ENCODE measurements at regions of chr21 and their contacts with region 1.

Region 1: DNA sequence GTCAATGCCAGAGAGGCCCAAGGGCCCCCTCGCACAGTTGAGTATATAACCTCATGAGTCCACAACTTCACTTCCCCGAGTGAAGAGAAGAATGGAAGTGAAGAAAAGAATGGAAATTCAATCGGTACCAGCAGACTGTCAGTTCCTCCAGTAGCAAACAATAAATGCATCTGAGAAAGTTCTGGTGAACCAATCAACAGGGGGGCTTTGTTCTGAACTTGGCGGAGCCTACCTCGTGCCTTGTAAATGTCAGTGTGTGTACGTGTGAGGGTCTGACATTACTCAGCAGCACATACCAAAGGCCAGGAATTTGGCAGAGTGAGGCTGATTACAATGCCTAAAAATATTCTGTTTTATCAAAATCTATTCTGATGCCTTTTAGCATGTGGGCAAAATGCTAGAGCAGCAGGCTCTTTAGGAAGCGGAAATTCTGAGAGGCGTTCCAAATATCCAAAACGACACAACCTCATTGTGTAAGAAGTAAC is 238.5 kb downstream of the LTN1 start:
- DNase-seq: peak in 1 of 2 donors; percentile 88
- H3K4me3 ChIP-seq: peak overlapping the region in 1 of 2 donors; percentile 11
- H3K27ac ChIP-seq: peak overlapping the region; percentile 86 to 96
- H3K4me1 ChIP-seq: peaks cover 4 to 38% of the 10 kb centered on the region in 2 donors
- H3K27me3 ChIP-seq: no peaks in the 10 kb centered on the region
- CTCF ChIP-seq: no peak

Region 2: DNA sequence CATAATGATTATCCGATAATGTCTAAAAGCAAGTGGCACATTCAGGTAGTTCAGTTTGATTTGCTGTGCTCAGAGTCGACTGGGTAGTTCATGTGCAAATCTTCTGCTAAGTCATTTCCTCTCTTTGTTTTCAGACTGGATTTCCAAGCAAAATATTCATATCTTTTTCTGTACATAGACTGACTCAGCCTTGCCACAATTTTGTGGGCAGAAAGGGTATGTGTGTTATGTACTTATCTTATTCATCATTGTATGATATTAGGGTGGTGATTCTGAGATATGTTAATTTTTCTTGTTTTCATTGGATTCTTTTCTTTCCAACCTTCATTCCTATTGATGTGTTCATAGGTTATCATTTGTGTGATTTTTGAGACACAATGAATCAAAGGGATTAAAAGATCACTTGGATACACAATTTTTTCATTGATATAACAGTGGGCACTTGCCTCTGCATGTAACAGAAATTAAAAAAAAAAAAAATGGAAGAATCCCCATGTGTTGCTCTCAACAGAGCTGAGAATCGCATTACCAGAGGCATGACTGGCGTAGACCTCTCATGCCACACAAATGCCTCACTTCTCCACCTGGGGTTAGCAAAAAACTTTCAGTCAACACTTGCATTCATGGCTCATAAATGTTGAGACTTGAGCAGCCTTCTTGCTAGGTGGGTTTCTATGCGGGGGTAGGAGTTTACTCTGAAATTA is 117.0 kb before region 1 on chr21:
- intact Hi-C with region 1: loop called (anchors 5 kb)
- DNase-seq: no peak
- H3K4me3 ChIP-seq: peak overlapping the region in 1 of 2 donors; percentile 37
- H3K27ac ChIP-seq: peak overlapping the region; percentile 86 to 92
- H3K4me1 ChIP-seq: peaks cover 3 to 39% of the 10 kb centered on the region in 2 donors
- H3K27me3 ChIP-seq: no peaks in the 10 kb centered on the region
- CTCF ChIP-seq: no peak

Region 3: GRCh38 chr21:28742527-28742926 is 11.6 kb before region 1 on chr21:
- intact Hi-C with region 1: no loop called
- DNase-seq: no peak
- H3K4me3 ChIP-seq: no peak overlapping the region
- H3K27ac ChIP-seq: no peak overlapping the region
- H3K4me1 ChIP-seq: peaks cover 0 to 8% of the 10 kb centered on the region in 2 donors
- H3K27me3 ChIP-seq: no peaks in the 10 kb centered on the region
- CTCF ChIP-seq: peak in 1 of 3 experiments; percentile 51

Region 4: GRCh38 chr21:28771790-28772501 is 17.8 kb after region 1 on chr21:
- intact Hi-C with region 1: loop called (anchors 1 kb)
- DNase-seq: peak in 1 of 2 donors; percentile 85
- H3K4me3 ChIP-seq: peak overlapping the region in 1 of 2 donors; percentile 9
- H3K27ac ChIP-seq: peak overlapping the region; percentile 86 to 91
- H3K4me1 ChIP-seq: peaks cover 18 to 57% of the 10 kb centered on the region in 2 donors
- H3K27me3 ChIP-seq: no peaks in the 10 kb centered on the region
- CTCF ChIP-seq: no peak

Region 5: DNA sequence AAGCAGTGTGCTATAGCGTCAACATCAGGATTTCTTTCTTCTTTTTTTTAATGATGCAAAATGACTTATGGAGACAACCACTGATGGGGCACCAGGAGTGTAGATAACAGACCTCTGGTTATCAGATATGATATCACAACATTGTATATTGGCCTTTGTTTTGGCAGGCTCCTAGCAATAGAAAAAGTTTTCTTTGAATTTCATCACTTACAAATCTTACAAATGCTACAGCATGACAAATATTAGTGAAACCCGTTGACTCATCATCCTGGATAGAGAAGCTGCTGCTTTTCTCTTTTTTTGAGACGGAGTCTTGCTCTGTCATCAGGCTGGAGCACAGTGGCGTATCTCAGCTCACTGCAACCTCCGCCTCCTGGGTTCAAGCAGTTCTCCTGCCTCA is 145.6 kb after region 1 on chr21:
- intact Hi-C with region 1: loop called (anchors 5 kb)
- DNase-seq: no peak
- H3K4me3 ChIP-seq: peak overlapping the region; percentile 18 to 21
- H3K27ac ChIP-seq: peak overlapping the region; percentile 65 to 76
- H3K4me1 ChIP-seq: peaks cover 2 to 36% of the 10 kb centered on the region in 2 donors
- H3K27me3 ChIP-seq: no peaks in the 10 kb centered on the region
- CTCF ChIP-seq: no peak